ENCODE measurements at regions of chr5 and their contacts with region 1.

Region 1: GRCh38 chr5:150217873-150218692 is 28.2 kb downstream of the SLC6A7 start:
- DNase-seq: peak; percentile 93
- H3K4me3 Mint-ChIP-seq: no peak overlapping the region
- H3K27ac Mint-ChIP-seq: no peak overlapping the region
- H3K4me1 Mint-ChIP-seq: no peaks in the 10 kb centered on the region
- H3K27me3 Mint-ChIP-seq: no peaks in the 10 kb centered on the region
- CTCF ChIP-seq: peak; percentile 98

Region 2: GRCh38 chr5:150135557-150136304 is 82.4 kb before region 1 on chr5:
- CTCF ChIA-PET with region 1: interaction called, 45 read pairs
- POLR2A ChIA-PET with region 1: no interaction called
- intact Hi-C with region 1: loop called (anchors 1 kb)
- DNase-seq: no peak
- H3K4me3 Mint-ChIP-seq: no peak overlapping the region
- H3K27ac Mint-ChIP-seq: no peak overlapping the region
- H3K4me1 Mint-ChIP-seq: peaks cover 19% of the 10 kb centered on the region
- H3K27me3 Mint-ChIP-seq: no peaks in the 10 kb centered on the region
- CTCF ChIP-seq: no peak

Region 3: DNA sequence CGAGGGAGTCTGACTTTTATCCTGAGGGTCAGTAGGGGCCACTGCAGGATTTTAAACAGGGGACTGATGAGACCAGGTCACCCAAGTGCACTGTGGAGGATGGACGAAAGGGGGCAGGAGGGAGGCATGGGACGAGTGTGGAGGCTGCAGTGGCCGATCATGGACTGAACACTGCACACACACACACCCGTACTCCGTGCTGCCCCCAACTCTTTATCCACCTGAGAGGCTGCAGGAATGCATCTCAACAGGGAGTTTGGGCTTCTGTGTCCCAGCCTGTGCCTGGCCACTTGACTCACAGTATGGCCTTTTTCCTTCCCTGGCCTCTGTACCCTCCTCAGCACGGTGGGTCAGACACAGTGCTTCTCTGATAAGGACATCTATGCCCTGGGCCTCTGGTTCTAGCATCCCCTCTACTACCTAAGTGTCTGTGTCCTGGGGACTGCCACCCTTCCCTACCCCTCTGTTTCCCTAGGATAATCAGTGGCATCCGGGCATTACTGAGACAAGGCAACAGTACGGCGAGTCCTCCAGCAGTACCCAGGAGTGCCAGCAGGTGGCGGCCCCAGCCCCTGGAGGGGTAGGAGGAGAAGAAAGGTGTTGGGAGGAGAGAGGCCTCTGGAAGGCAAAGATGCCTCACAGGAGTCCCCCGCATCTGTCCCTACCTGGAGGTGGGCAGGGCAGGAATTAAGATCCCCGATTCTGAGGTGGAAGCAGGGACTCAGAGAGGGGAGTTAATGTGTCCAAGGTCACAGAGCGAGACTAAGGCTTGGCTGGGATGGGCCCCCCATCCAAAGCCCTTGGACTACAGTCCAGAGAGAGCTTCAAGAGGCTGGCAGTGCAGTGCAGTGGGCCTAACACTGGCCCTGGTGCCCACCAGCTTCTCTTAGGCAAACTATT is 56.6 kb before region 1 on chr5:
- CTCF ChIA-PET with region 1: interaction called, 118 read pairs
- POLR2A ChIA-PET with region 1: interaction called, 4 read pairs
- intact Hi-C with region 1: loop called (anchors 1 kb)
- DNase-seq: peak; percentile 88
- H3K4me3 Mint-ChIP-seq: no peak overlapping the region
- H3K27ac Mint-ChIP-seq: no peak overlapping the region
- H3K4me1 Mint-ChIP-seq: peaks cover 12% of the 10 kb centered on the region
- H3K27me3 Mint-ChIP-seq: no peaks in the 10 kb centered on the region
- CTCF ChIP-seq: peak; percentile 98

Region 4: DNA sequence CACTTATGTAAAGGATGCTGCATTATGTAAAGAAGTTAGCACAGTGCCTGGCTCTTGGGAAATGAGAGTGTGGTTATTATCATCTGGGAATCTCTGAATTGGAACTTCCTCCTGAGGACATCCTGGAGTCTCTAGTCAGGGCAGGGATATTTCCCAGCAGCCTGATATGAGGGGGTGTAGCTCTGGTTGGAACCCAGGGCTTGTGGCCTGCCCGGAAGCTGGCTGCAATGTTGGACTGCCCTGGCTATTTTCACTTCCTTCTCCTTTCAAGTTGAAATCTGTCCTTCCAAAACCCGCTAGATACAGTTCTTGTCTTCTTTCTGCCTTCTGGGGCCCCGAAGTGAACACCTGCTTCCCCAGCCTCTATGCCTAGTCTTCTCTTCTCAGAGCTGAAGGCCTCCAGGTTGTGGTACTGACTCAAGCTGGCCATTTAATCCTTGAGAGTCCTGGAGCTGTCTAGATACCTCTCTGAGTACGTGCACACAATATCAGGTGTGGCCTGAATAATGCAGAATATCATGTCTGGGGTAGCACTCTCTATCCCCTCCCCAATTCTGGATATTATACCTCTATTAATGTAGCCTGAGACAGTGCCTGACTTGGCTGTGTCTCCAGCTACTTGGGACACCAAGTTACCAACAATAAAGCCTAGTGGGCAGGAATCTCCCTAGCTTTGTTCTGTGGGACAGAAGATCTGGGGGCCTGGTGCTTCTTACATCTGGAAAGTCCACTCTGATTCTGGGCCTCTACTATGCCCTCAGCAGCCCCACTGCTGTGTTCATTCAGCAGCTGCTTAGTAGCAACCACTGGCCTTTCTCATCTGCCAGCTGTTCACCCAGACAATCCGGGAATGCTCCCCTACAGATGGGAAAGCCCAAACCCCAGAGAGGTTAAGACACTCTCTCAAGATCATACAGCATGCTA is 16.8 kb after region 1 on chr5:
- CTCF ChIA-PET with region 1: interaction called, 15 read pairs
- POLR2A ChIA-PET with region 1: interaction called, 3 read pairs
- intact Hi-C with region 1: no loop called
- DNase-seq: no peak
- H3K4me3 Mint-ChIP-seq: no peak overlapping the region
- H3K27ac Mint-ChIP-seq: no peak overlapping the region
- H3K4me1 Mint-ChIP-seq: no peaks in the 10 kb centered on the region
- H3K27me3 Mint-ChIP-seq: no peaks in the 10 kb centered on the region
- CTCF ChIP-seq: no peak

Region 5: GRCh38 chr5:151252762-151253604 is 1034.9 kb after region 1 on chr5 and contains the start of gene GM2A:
- CTCF ChIA-PET with region 1: no interaction called
- POLR2A ChIA-PET with region 1: no interaction called
- intact Hi-C with region 1: no loop called
- DNase-seq: peak; percentile 100
- H3K4me3 Mint-ChIP-seq: peak within 1 kb of the TSS; percentile 79
- H3K27ac Mint-ChIP-seq: peak within 1 kb of the TSS; percentile 10
- H3K4me1 Mint-ChIP-seq: peaks cover 21% of the 10 kb centered on the region
- H3K27me3 Mint-ChIP-seq: no peaks in the 10 kb centered on the region
- CTCF ChIP-seq: no peak
- total RNA-seq, gene GM2A: 28.9 and 36.1 TPM in 2 replicates

Measured in MCF 10A (cell line).